ENCODE measurements at regions of chr9 and their contacts with region 1.

Region 1: DNA sequence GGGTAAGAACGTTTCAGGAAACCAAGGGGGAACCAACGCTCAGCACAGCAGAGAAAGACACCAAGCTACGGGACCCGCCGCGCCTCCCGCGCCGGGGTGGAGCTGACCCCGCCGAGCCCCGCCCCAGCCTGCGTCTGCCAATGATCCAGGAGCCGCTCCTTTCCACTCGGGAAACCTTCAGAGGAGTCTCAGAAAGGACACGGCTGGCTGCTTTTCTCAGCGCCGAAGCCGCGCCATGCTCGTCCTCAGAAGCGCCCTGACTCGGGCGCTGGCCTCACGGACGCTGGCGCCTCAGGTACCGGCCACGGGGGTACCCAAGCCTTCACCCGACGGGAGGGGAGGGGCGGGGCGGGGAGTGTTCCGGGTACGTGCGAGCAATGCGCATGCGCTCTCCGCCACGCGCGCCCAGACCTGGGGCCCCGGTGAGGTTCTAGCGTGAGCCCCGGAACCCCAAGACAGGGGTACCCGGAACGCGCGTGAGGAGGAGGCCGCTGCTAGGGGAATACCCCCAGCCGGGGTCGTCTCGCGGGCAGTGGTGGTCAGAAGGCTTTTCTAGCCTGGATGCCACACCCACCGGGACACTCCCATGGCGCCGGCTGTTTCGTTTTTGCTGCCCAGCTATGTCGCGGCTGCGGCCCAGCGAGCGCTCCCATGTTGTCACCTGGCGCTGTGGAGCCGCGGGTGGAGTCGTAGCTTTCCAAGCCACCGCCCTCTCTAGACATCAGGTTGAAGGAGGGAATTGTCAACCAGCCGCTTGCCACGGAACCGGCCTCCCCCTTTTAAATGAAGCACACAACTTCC is at the start of gene NIPSNAP3A:
- DNase-seq: peak; percentile 85
- H3K4me3 Mint-ChIP-seq: peak within 1 kb of the TSS; percentile 94
- H3K27ac Mint-ChIP-seq: peak within 1 kb of the TSS; percentile 98
- H3K4me1 Mint-ChIP-seq: peaks cover 46% of the 10 kb centered on the region
- H3K27me3 Mint-ChIP-seq: peaks cover 2% of the 10 kb centered on the region
- total RNA-seq, gene NIPSNAP3A: 8.3 and 9.2 TPM in 2 replicates

Region 2: DNA sequence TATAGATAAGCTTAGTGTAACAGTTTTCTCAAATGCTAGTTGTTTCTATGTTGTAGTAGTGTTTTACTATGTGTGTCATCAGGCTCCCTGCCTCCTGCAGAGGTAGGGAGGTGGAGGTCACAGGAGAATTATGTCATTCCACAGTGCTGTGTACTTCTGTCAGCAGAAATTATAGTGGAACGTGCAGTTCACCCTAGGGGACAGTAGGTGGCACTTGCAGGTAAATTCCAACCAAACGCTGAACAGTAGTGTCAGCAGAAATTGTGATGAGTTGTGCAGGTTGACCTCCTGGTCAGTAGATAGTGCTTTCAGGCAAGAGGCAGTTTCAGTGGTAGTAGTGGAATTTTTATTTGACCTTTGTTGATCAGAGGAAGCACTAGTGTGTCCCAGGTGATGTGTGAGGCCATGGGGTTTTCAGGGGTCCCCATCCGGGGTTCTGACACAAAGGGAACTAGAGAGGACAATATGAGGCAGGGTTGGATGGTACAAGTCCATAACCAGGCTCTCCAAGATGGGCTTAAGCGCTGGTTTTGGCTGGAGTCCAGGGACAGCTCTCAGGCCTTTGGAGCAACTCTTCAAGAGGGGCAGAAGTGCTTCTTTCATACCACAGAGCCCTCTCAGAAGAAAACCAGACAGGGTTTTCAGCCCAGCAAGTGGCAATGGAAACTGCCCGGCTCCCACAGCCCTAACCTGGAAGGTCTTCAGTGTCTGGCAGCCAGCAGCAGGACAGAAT is 1349.7 kb before region 1 on chr9:
- intact Hi-C with region 1: loop called (anchors 5 kb)
- DNase-seq: no peak
- H3K4me3 Mint-ChIP-seq: no peak overlapping the region
- H3K27ac Mint-ChIP-seq: no peak overlapping the region
- H3K4me1 Mint-ChIP-seq: no peaks in the 10 kb centered on the region
- H3K27me3 Mint-ChIP-seq: no peaks in the 10 kb centered on the region

Region 3: GRCh38 chr9:104093647-104094533 is 653.9 kb before region 1 on chr9 and contains the start of gene SMC2:
- intact Hi-C with region 1: loop called (anchors 1 kb)
- DNase-seq: peak; percentile 90
- H3K4me3 Mint-ChIP-seq: peak within 1 kb of the TSS; percentile 98
- H3K27ac Mint-ChIP-seq: peak within 1 kb of the TSS; percentile 100
- H3K4me1 Mint-ChIP-seq: peaks cover 37% of the 10 kb centered on the region
- H3K27me3 Mint-ChIP-seq: no peaks in the 10 kb centered on the region
- total RNA-seq, gene SMC2: 51.9 and 52.5 TPM in 2 replicates

Region 4: DNA sequence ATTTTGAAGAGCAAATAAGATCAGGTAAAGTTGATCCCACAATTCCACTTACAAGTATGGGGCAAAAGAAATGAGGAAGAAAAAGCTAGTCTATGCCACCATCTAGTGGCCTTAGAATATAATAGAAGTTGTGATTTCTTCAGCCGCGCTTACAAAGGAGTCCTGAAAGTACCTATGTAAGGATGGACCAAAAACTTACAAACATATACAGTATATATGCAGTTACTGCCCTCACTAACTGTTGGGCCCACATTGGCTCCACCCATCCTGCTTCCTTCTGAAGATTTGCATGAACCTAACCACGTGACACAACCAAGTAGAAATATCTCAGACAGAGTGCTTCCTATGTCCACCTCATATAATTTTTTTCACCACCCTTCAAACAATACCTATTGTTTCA is 65.1 kb before region 1 on chr9:
- intact Hi-C with region 1: loop called (anchors 5 kb)
- DNase-seq: no peak
- H3K4me3 Mint-ChIP-seq: no peak overlapping the region
- H3K27ac Mint-ChIP-seq: no peak overlapping the region
- H3K4me1 Mint-ChIP-seq: peaks cover 5% of the 10 kb centered on the region
- H3K27me3 Mint-ChIP-seq: no peaks in the 10 kb centered on the region

Region 5: GRCh38 chr9:104817437-104817836 is 69.7 kb after region 1 on chr9:
- intact Hi-C with region 1: no loop called
- DNase-seq: no peak
- H3K4me3 Mint-ChIP-seq: no peak overlapping the region
- H3K27ac Mint-ChIP-seq: no peak overlapping the region
- H3K4me1 Mint-ChIP-seq: no peaks in the 10 kb centered on the region
- H3K27me3 Mint-ChIP-seq: no peaks in the 10 kb centered on the region

Region 6: GRCh38 chr9:104968025-104968982 is 220.5 kb after region 1 on chr9:
- intact Hi-C with region 1: loop called (anchors 1 kb)
- DNase-seq: peak; percentile 84
- H3K4me3 Mint-ChIP-seq: peak overlapping the region; percentile 92
- H3K27ac Mint-ChIP-seq: peak overlapping the region; percentile 66
- H3K4me1 Mint-ChIP-seq: peaks cover 13% of the 10 kb centered on the region
- H3K27me3 Mint-ChIP-seq: peaks cover 21% of the 10 kb centered on the region

Region 7: DNA sequence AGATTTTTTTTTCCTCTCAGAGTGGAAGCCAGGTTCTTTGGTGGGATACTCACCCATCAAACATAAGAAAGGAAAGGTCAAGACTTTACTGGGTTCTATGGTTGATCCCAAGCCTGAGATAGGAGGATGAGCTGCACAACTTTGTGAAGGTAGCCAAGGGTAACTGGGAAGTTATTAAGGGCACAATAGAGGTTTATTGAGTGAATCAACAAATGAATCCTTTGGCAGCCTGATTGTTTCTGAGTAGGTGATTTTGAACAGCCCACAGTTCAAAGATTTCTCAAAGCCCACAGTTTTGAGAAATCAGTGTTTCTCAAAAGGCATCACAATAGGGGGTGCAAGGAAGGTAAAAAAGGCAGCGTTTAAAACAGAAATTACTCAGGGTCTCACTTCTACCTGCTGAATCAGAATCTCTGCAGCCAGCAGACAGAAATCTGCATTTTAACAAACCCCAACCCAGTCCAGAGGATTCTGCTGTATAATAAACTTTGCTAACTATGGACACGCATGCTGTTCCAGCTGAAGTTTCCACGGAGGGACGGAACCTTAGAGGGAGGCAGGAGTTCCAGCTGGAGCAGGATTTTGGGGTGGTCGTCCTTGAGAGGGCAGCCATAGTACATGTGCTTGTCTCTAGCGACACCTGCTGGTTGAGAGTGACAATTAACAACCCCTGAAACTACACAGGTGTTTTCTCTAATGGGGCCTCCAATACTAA is 667.3 kb after region 1 on chr9:
- intact Hi-C with region 1: loop called (anchors 2 kb)
- DNase-seq: peak; percentile 25
- H3K4me3 Mint-ChIP-seq: no peak overlapping the region
- H3K27ac Mint-ChIP-seq: no peak overlapping the region
- H3K4me1 Mint-ChIP-seq: peaks cover 13% of the 10 kb centered on the region
- H3K27me3 Mint-ChIP-seq: peaks cover 46% of the 10 kb centered on the region

Region 8: GRCh38 chr9:105694190-105694847 is 946.6 kb after region 1 on chr9 and contains the start of gene TMEM38B:
- intact Hi-C with region 1: loop called (anchors 2 kb)
- DNase-seq: peak; percentile 77
- H3K4me3 Mint-ChIP-seq: peak within 1 kb of the TSS; percentile 87
- H3K27ac Mint-ChIP-seq: peak within 1 kb of the TSS; percentile 61
- H3K4me1 Mint-ChIP-seq: peaks cover 26% of the 10 kb centered on the region
- H3K27me3 Mint-ChIP-seq: peaks cover 24% of the 10 kb centered on the region
- total RNA-seq, gene TMEM38B: 11.9 and 13.8 TPM in 2 replicates

Measured in activated T-helper 1 cell treated with anti-CD3 and anti-CD28 coated beads, Interleukin-12 subunit alpha, Interleukin-12 subunit beta, Interleukin-2, Interleukin-4 antibody, amounts not matched to agents 30 ng/mL and 10 ng/mL and 1 ng/mL, durations not matched to agents 14 hours and 24 hours and 36 hours (primary cell).